ENCODE measurements at regions of chr4 and their contacts with region 1.

Region 1: DNA sequence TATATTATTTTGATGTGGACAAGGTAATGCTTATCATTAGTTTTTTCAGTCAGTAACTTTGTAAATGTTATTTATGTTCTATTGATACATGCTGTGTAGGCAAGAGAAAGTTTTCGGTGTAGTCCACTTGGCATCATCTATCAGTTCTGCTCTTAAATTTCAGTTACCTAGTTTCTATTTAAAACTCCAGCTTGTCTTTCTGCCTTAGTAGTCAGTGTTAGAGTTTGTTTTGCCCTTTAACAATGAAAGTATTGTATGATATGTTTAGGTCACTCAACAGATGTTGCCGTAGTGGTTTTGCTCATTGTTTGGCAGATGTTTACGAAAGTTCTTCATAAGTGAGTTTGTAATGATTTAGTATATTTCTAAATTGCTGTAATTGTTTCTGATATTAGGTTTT is 34.9 kb upstream of the FHDC1 start:
- DNase-seq: no peak
- ATAC-seq: no peak
- H3K4me3 ChIP-seq: no peak overlapping the region
- H3K27ac ChIP-seq: 0 out of 2 replicates have a peak overlapping the region, but pooled peaks have one; percentile 18
- H3K4me1 ChIP-seq: peaks cover 4% of the 10 kb centered on the region; the same call in 1 of the 2 replicates
- H3K27me3 ChIP-seq: no peaks in the 10 kb centered on the region
- CTCF ChIP-seq: no peak

Region 2: GRCh38 chr4:152525873-152526272 is 375.3 kb before region 1 on chr4:
- CTCF ChIA-PET with region 1: no interaction called
- POLR2A ChIA-PET with region 1: no interaction called
- intact Hi-C with region 1: no loop called
- DNase-seq: no peak
- ATAC-seq: peak; percentile 60
- H3K4me3 ChIP-seq: no peak overlapping the region
- H3K27ac ChIP-seq: no peak overlapping the region
- H3K4me1 ChIP-seq: peaks cover 16% of the 10 kb centered on the region
- H3K27me3 ChIP-seq: no peaks in the 10 kb centered on the region
- CTCF ChIP-seq: no peak

Region 3: DNA sequence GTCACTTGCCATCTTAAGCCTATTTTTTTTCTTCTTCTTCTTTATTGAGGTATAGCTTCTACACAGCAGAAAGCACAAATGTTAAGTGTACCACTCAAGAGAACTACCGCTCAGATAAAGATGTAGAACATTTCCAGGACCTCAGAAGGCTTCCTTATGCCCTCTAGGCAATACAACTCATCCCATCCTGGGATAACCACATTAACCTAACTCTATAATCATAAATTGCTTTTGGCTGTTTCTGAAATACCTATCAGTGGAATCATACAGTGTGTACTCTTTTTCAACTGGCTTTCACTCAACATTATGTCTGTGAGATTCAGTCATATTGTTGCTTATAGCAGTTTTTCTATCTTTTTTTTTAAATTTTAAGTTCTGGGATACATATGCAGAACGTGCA is 69.8 kb before region 1 on chr4:
- CTCF ChIA-PET with region 1: no interaction called
- POLR2A ChIA-PET with region 1: no interaction called
- intact Hi-C with region 1: no loop called
- DNase-seq: peak; percentile 11
- ATAC-seq: no peak
- H3K4me3 ChIP-seq: no peak overlapping the region
- H3K27ac ChIP-seq: no peak overlapping the region
- H3K4me1 ChIP-seq: no peaks in the 10 kb centered on the region
- H3K27me3 ChIP-seq: no peaks in the 10 kb centered on the region
- CTCF ChIP-seq: no peak

Region 4: GRCh38 chr4:152926959-152927358 is 25.8 kb after region 1 on chr4:
- CTCF ChIA-PET with region 1: no interaction called
- POLR2A ChIA-PET with region 1: no interaction called
- intact Hi-C with region 1: no loop called
- DNase-seq: no peak
- ATAC-seq: no peak
- H3K4me3 ChIP-seq: no peak overlapping the region
- H3K27ac ChIP-seq: no peak overlapping the region
- H3K4me1 ChIP-seq: no peaks in the 10 kb centered on the region
- H3K27me3 ChIP-seq: no peaks in the 10 kb centered on the region
- CTCF ChIP-seq: no peak

Region 5: DNA sequence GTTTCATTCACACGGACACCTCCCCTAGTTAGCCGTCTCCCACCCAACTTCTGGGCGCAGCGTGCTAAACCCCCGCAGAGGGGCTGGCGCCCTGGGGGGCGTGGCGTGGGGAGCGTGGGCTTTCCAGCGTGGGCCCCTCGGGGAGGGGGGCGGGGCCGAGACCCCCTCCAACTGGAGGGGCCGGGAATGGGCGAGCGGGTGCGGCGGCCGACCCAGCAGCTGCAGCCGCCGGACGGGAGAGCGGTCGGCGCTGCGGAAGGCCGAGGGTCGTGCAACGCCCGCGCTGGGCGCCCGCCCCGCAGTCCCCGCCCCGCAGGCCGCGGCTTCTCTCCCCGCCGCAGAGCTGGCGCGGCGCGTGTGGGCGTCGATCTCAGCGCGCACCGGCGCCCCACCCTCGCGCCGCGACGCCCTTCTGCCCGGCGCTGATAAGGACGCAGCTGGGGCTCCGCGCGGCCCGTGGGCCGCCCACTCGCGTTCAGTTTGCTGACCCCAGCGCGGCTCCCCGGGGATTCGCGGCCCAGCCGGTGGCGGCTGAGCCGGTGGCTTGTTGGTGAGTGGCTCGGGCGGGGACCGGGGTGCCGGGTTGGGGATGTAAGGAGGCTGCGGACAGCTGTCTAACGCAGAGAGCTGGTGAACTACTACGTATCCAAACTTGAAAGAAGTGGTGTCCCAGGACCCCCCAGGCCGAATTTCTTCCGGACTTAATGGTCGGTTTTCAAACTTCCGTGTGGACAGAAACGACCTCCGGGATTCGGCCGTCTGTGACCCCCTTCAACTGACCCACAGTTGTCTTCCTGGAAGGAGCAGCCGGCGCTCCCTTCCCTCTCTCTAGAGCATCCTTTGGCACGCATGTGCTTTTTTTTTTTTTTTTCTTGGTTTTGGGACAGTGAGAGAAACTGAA is 36.4 kb after region 1 on chr4:
- CTCF ChIA-PET with region 1: no interaction called
- POLR2A ChIA-PET with region 1: no interaction called
- intact Hi-C with region 1: loop called (anchors 5 kb)
- DNase-seq: no peak
- ATAC-seq: no peak
- H3K4me3 ChIP-seq: peak overlapping the region; percentile 85
- H3K27ac ChIP-seq: no peak overlapping the region
- H3K4me1 ChIP-seq: peaks cover 9% of the 10 kb centered on the region
- H3K27me3 ChIP-seq: no peaks in the 10 kb centered on the region
- CTCF ChIP-seq: no peak